Psoas muscle (tissue), 8 donors: ENCODE measurements at regions of chr9 and their contacts with region 1.

Region 1: GRCh38 chr9:112091810-112092209 is 83.3 kb downstream of the SUSD1 start:
- DNase-seq: no peak
- ATAC-seq: no peak
- H3K4me3 ChIP-seq: no peak overlapping the region
- H3K27ac ChIP-seq: no peak overlapping the region
- H3K4me1 ChIP-seq: no peaks in the 10 kb centered on the region
- H3K27me3 ChIP-seq: no peaks in the 10 kb centered on the region
- CTCF ChIP-seq: no peak

Region 2: GRCh38 chr9:112140936-112141335 is 49.1 kb after region 1 on chr9:
- intact Hi-C with region 1: no loop called
- DNase-seq: no peak
- ATAC-seq: no peak
- H3K4me3 ChIP-seq: no peak overlapping the region
- H3K27ac ChIP-seq: no peak overlapping the region
- H3K4me1 ChIP-seq: no peaks in the 10 kb centered on the region
- H3K27me3 ChIP-seq: no peaks in the 10 kb centered on the region
- CTCF ChIP-seq: no peak

Region 3: DNA sequence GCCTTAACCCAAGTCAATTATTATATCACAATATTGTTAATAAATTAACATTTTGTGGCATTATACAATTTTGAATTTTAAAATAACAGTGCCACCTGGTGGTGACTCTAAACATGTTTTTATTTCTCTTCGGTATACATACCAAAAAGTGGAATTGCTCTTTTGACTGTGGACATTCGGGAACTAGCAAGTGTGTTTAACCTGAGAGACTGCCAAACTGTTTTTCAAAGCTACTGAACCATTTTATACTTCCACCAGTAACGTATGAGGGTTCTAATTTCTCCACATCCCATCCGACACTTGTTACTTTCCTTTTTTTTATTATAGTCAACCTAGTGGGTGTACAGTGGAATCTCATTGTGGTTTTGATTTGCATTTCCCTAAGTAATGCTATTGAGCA is 269.8 kb after region 1 on chr9:
- intact Hi-C with region 1: loop called (anchors 2 to 5 kb)
- DNase-seq: no peak
- ATAC-seq: peak in 2 of 4 donors; percentile 46 to 76
- H3K4me3 ChIP-seq: no peak overlapping the region
- H3K27ac ChIP-seq: no peak overlapping the region
- H3K4me1 ChIP-seq: no peaks in the 10 kb centered on the region
- H3K27me3 ChIP-seq: no peaks in the 10 kb centered on the region
- CTCF ChIP-seq: peak; percentile 71